GM12878 (cell line): ENCODE measurements at regions of chr21 and their contacts with region 1.

Region 1: GRCh38 chr21:16082038-16082816 is 352.4 kb downstream of the USP25 start:
- DNase-seq: no peak
- ATAC-seq: 0 out of 3 replicates have a peak, but pooled peaks have one; percentile 29
- H3K4me3 ChIP-seq: no peak overlapping the region
- H3K27ac ChIP-seq: no peak overlapping the region
- H3K4me1 ChIP-seq: no peaks in the 10 kb centered on the region
- H3K27me3 ChIP-seq: no peaks in the 10 kb centered on the region
- CTCF ChIP-seq: peak in 1 of 3 experiments; percentile 29; a peak in 3 of 6 replicates
- EP300 ChIP-seq: no peak
- POLR2A ChIP-seq: no peak
- RAD21 ChIP-seq: peak; percentile 53

Region 2: GRCh38 chr21:16324630-16325029 is 242.4 kb after region 1 on chr21:
- CTCF ChIA-PET with region 1: interaction called, 10 read pairs
- POLR2A ChIA-PET with region 1: no interaction called
- RAD21 ChIA-PET with region 1: interaction called, 4 read pairs
- SMC1A ChIA-PET with region 1: interaction called, 5 read pairs
- in situ Hi-C with region 1: loop called (anchors 5 kb)
- intact Hi-C with region 1: no loop called
- DNase-seq: no peak
- ATAC-seq: no peak
- H3K4me3 ChIP-seq: no peak overlapping the region
- H3K27ac ChIP-seq: no peak overlapping the region
- H3K4me1 ChIP-seq: no peaks in the 10 kb centered on the region
- H3K27me3 ChIP-seq: no peaks in the 10 kb centered on the region
- CTCF ChIP-seq: no peak
- EP300 ChIP-seq: no peak
- POLR2A ChIP-seq: no peak
- RAD21 ChIP-seq: no peak

Region 3: GRCh38 chr21:16330082-16330907 is 248.1 kb after region 1 on chr21:
- CTCF ChIA-PET with region 1: interaction called, 10 read pairs
- POLR2A ChIA-PET with region 1: no interaction called
- RAD21 ChIA-PET with region 1: interaction called, 4 read pairs
- SMC1A ChIA-PET with region 1: interaction called, 5 read pairs
- in situ Hi-C with region 1: loop called (anchors 5 kb)
- intact Hi-C with region 1: loop called (anchors 1 kb)
- DNase-seq: no peak
- ATAC-seq: peak; percentile 95
- H3K4me3 ChIP-seq: no peak overlapping the region
- H3K27ac ChIP-seq: no peak overlapping the region
- H3K4me1 ChIP-seq: no peaks in the 10 kb centered on the region
- H3K27me3 ChIP-seq: no peaks in the 10 kb centered on the region
- CTCF ChIP-seq: peak; percentile 54 to 66 (median 58); a peak in 5 of 6 replicates
- EP300 ChIP-seq: no peak
- POLR2A ChIP-seq: no peak
- RAD21 ChIP-seq: peak; percentile 84

Region 4: GRCh38 chr21:16551101-16551695 is 469.0 kb after region 1 on chr21:
- CTCF ChIA-PET with region 1: no interaction called
- POLR2A ChIA-PET with region 1: no interaction called
- RAD21 ChIA-PET with region 1: no interaction called
- SMC1A ChIA-PET with region 1: no interaction called
- in situ Hi-C with region 1: no loop called
- intact Hi-C with region 1: no loop called
- DNase-seq: no peak
- ATAC-seq: no peak
- H3K4me3 ChIP-seq: no peak overlapping the region
- H3K27ac ChIP-seq: no peak overlapping the region
- H3K4me1 ChIP-seq: no peaks in the 10 kb centered on the region
- H3K27me3 ChIP-seq: no peaks in the 10 kb centered on the region
- CTCF ChIP-seq: no peak
- EP300 ChIP-seq: no peak
- POLR2A ChIP-seq: no peak
- RAD21 ChIP-seq: no peak